IMR-90 (cell line): ENCODE measurements at regions of chr18 and their contacts with region 1.

Region 1: DNA sequence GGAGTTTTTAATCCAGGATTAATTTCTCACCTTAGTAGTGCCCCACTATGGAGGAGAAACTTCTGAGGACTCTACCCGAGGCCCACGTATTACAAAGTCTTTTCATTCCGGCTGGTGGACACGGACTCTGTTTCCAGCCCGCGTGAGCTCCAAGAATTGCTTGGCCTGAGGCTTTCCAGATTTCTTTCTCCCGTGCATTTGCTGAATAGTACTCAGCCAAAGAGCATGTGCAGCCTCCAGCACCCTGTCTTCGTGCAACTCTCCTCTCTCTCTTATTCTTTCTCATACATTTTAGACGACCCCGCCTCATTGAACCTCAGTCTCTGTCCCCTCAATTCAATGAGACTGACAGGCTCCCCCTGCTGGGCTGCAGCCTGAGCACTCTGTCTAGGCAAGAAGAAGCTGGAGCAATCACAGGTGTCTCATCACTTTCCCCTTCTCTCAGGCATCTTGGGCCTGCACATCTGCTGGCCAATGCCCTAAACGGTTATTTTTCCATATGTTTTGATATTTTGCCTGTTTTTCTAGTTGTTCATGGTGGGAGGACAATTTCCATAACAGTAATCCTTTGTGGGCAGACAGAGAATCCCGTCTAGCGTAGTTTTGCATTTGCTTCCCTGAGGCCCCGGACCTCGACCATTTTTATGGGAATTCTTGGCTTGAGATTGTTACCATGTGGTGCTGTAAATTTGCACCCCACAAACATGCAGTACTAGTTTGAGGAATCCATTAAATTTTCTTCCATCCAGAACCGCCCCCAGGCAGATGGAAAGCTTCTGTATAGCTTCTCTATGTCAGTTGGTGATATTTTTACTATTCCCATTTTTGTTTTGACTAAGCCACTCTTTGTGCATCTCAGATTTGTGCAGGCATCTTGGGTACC is 50.1 kb upstream of the LPIN2 start:
- DNase-seq: peak; percentile 15
- ATAC-seq: peak; percentile 70
- H3K4me3 ChIP-seq: no peak overlapping the region
- H3K27ac ChIP-seq: no peak overlapping the region
- H3K4me1 ChIP-seq: peaks cover 7% of the 10 kb centered on the region; the same call in 1 of the 2 replicates
- H3K27me3 ChIP-seq: no peaks in the 10 kb centered on the region
- CTCF ChIP-seq: peak; percentile 53
- POLR2A ChIP-seq: no peak
- RAD21 ChIP-seq: peak; percentile 46

Region 2: DNA sequence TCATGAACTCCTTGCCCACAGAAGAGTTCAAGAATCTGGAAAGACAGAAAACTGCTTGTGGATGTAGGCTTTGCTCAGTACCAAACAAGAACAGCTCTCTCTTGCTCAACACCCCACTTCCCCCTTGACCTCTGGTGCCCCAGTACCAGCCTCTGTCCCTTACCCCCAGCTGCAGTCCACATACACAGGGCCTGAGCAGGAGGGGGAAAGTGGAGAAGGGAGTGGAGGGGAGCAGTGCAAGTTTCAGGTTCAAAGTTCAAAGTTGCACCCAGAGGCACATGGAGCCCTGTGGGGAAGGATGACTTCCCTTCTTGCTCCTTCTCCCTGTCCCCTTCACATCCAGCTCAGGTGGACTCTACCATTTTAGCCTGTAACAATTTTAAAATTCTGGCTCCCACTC is 11.0 kb after region 1 on chr18:
- CTCF ChIA-PET with region 1: interaction called, 16 read pairs
- POLR2A ChIA-PET with region 1: interaction called, 15 read pairs
- dilution Hi-C with region 1: no loop called
- in situ Hi-C with region 1: no loop called
- intact Hi-C with region 1: no loop called
- DNase-seq: no peak
- ATAC-seq: no peak
- H3K4me3 ChIP-seq: no peak overlapping the region
- H3K27ac ChIP-seq: no peak overlapping the region
- H3K4me1 ChIP-seq: no peaks in the 10 kb centered on the region
- H3K27me3 ChIP-seq: no peaks in the 10 kb centered on the region
- CTCF ChIP-seq: no peak
- POLR2A ChIP-seq: no peak
- RAD21 ChIP-seq: no peak

Region 3: GRCh38 chr18:3525870-3526420 is 462.9 kb after region 1 on chr18:
- CTCF ChIA-PET with region 1: no interaction called
- POLR2A ChIA-PET with region 1: no interaction called
- dilution Hi-C with region 1: no loop called
- in situ Hi-C with region 1: no loop called
- intact Hi-C with region 1: no loop called
- DNase-seq: no peak
- ATAC-seq: no peak; the same call in 1 of the 2 replicates
- H3K4me3 ChIP-seq: no peak overlapping the region
- H3K27ac ChIP-seq: no peak overlapping the region
- H3K4me1 ChIP-seq: peaks cover 2% of the 10 kb centered on the region; the same call in 1 of the 2 replicates
- H3K27me3 ChIP-seq: peaks cover 4% of the 10 kb centered on the region; the same call in 1 of the 2 replicates
- CTCF ChIP-seq: no peak
- POLR2A ChIP-seq: no peak
- RAD21 ChIP-seq: no peak

Region 4: DNA sequence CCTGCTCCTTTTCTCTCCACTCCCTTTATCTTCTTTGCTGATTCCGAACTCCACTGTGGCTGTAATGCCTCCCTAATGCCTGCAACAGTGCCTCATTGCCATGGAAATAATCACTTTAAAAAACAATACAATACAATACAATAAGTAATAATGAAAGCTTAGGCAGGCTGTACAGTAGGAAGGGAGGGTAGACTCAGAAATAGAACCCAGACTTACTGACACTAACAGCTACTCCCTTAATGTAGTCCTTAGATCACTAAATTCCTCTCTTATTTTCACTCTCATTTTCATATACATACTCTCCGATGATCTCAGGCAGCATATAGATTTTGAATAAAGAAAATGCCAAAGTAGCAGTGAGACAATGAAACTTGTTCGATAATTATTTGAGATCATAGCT is 1321.9 kb after region 1 on chr18:
- CTCF ChIA-PET with region 1: no interaction called
- POLR2A ChIA-PET with region 1: no interaction called
- dilution Hi-C with region 1: no loop called
- in situ Hi-C with region 1: no loop called
- intact Hi-C with region 1: no loop called
- DNase-seq: no peak
- ATAC-seq: no peak
- H3K4me3 ChIP-seq: no peak overlapping the region
- H3K27ac ChIP-seq: no peak overlapping the region
- H3K4me1 ChIP-seq: no peaks in the 10 kb centered on the region
- H3K27me3 ChIP-seq: no peaks in the 10 kb centered on the region
- CTCF ChIP-seq: no peak
- POLR2A ChIP-seq: no peak
- RAD21 ChIP-seq: no peak